ENCODE measurements at regions of chr6 and their contacts with region 1.

Region 1: DNA sequence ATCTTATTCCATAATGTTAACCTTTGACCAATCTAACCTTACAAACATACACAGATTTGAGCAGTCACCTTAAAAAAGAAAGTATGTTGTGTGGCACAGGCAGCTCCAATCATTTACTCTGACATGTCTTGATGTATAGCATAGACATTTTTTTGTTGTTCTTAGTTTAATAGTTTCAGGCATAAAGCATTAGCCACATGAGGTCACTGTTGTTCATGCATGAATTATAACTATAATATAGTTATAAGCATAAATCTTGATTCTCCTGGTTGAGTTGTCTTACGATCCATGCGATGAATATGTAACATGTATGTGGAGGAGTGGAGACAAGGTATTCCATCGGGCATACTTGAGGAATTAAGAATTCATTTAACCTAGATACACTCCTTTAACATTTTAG is 26.1 kb upstream of the NKAIN2 start:
- DNase-seq: peak; percentile 54
- H3K4me3 Mint-ChIP-seq: no peak overlapping the region
- H3K27ac Mint-ChIP-seq: no peak overlapping the region
- H3K4me1 Mint-ChIP-seq: no peaks in the 10 kb centered on the region
- H3K27me3 Mint-ChIP-seq: peaks cover 9% of the 10 kb centered on the region
- CTCF ChIP-seq: peak; percentile 55

Region 2: GRCh38 chr6:123788319-123788718 is 10.8 kb after region 1 on chr6:
- CTCF ChIA-PET with region 1: interaction called, 19 read pairs
- POLR2A ChIA-PET with region 1: no interaction called
- intact Hi-C with region 1: no loop called
- DNase-seq: no peak
- H3K4me3 Mint-ChIP-seq: no peak overlapping the region
- H3K27ac Mint-ChIP-seq: no peak overlapping the region
- H3K4me1 Mint-ChIP-seq: no peaks in the 10 kb centered on the region
- H3K27me3 Mint-ChIP-seq: no peaks in the 10 kb centered on the region
- CTCF ChIP-seq: no peak

Region 3: GRCh38 chr6:124722141-124722878 is 944.7 kb after region 1 on chr6:
- CTCF ChIA-PET with region 1: no interaction called
- POLR2A ChIA-PET with region 1: no interaction called
- intact Hi-C with region 1: no loop called
- DNase-seq: no peak
- H3K4me3 Mint-ChIP-seq: no peak overlapping the region
- H3K27ac Mint-ChIP-seq: no peak overlapping the region
- H3K4me1 Mint-ChIP-seq: peaks cover 6% of the 10 kb centered on the region
- H3K27me3 Mint-ChIP-seq: no peaks in the 10 kb centered on the region
- CTCF ChIP-seq: no peak

Region 4: GRCh38 chr6:124795643-124796463 is 1018.3 kb after region 1 on chr6:
- CTCF ChIA-PET with region 1: interaction called, 71 read pairs
- POLR2A ChIA-PET with region 1: no interaction called
- intact Hi-C with region 1: loop called (anchors 1 kb)
- DNase-seq: peak; percentile 52
- H3K4me3 Mint-ChIP-seq: no peak overlapping the region
- H3K27ac Mint-ChIP-seq: no peak overlapping the region
- H3K4me1 Mint-ChIP-seq: peaks cover 16% of the 10 kb centered on the region
- H3K27me3 Mint-ChIP-seq: no peaks in the 10 kb centered on the region
- CTCF ChIP-seq: peak; percentile 85

Region 5: GRCh38 chr6:124854338-124854922 is 1076.9 kb after region 1 on chr6:
- CTCF ChIA-PET with region 1: interaction called, 35 read pairs
- POLR2A ChIA-PET with region 1: interaction called, 3 read pairs
- intact Hi-C with region 1: loop called (anchors 1 kb)
- DNase-seq: peak; percentile 11
- H3K4me3 Mint-ChIP-seq: no peak overlapping the region
- H3K27ac Mint-ChIP-seq: no peak overlapping the region
- H3K4me1 Mint-ChIP-seq: no peaks in the 10 kb centered on the region
- H3K27me3 Mint-ChIP-seq: no peaks in the 10 kb centered on the region
- CTCF ChIP-seq: peak; percentile 38